Right ventricle myocardium inferior (tissue), 1 donor: ENCODE measurements at regions of chr9 and their contacts with region 1.

Region 1: GRCh38 chr9:122912964-122913673 is at the start of gene ZBTB6:
- DNase-seq: peak; percentile 76
- ATAC-seq: peak; percentile 97
- total RNA-seq, gene ZBTB6: 5.3 TPM

Region 2: DNA sequence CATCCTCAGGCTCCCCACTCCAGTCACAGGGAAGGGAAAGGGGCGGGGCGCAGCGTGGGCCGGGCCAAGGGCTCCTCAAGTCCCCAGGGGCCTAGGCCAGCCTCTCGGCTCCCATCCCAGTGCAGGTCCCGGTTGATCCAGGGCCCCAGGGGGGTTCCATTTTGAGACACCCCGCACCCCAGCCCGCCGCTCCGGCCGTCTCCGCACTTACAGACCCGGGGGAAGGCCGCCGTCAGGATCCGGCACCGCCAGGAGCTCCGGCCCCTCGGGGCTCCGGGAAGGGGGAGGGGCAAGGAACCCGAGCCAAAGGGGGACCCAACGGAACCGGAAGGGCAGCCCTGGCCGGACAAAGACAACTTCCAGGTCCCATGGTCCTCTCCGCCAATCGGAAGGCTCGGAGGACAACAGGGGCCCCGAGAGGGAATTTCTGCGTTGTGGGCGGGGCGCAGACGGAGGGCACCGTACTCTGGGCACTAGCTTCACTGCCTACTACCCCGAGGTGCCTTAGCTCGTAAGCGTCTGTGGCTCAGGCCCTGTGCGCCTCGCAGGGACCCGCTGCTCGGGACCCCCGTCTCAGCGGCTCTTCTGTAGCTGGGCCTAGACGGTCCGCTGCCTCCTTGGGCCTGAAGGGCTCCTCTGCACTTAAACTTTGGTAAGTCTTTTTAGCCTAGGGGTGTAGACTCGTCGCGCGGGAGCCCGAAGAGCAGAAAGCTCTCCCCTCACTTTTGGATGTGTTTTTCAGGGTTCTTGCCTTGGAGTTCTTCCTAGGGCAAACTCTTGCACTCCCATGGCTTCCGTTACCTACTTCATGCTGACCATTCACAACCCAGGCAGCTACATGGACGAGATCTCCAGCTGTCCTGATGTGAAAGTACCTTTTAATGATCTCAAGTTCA is 18.4 kb after region 1 on chr9 and contains the start of gene ZBTB26:
- intact Hi-C with region 1: no loop called
- DNase-seq: peak; percentile 95
- ATAC-seq: peak; percentile 99
- total RNA-seq, gene ZBTB26: 4.6 TPM

Region 3: GRCh38 chr9:122991370-122991830 is 78.3 kb after region 1 on chr9:
- intact Hi-C with region 1: loop called (anchors 5 kb)
- DNase-seq: no peak
- ATAC-seq: no peak